BJ (cell line): ENCODE measurements at regions of chr22 and their contacts with region 1.

Region 1: GRCh38 chr22:45101515-45102227 is 62.1 kb upstream of the NUP50 start:
- DNase-seq: no peak
- H3K4me3 ChIP-seq: no peak overlapping the region
- H3K27me3 ChIP-seq: peaks cover 4% of the 10 kb centered on the region
- CTCF ChIP-seq: peak; percentile 80

Region 2: GRCh38 chr22:44920183-44920582 is 181.5 kb before region 1 on chr22:
- CTCF ChIA-PET with region 1: no interaction called
- POLR2A ChIA-PET with region 1: no interaction called
- DNase-seq: no peak
- H3K4me3 ChIP-seq: no peak overlapping the region
- H3K27me3 ChIP-seq: no peaks in the 10 kb centered on the region
- CTCF ChIP-seq: no peak

Region 3: DNA sequence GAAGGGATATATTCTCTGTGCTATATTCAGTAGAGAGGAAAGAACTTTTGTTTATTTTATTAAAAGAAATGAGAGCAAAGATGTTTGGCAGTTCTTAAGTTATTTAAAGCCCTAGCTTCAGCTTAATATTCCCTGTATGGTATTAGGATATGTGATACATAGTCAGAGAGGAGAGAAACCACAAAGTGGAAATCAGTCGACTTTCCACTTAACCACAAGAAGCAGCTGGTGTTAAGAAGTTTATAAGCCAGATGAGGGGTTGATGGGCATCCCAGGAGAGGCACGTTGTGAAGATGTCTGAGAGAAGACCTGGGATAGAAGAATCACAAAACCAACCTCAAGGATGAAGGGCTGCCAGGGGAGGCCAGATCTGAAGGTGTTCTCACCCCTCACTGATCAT is 68.5 kb before region 1 on chr22:
- CTCF ChIA-PET with region 1: no interaction called
- POLR2A ChIA-PET with region 1: no interaction called
- DNase-seq: no peak
- H3K4me3 ChIP-seq: no peak overlapping the region
- H3K27me3 ChIP-seq: peaks cover 3% of the 10 kb centered on the region; the same call in 1 of the 2 replicates
- CTCF ChIP-seq: no peak

Region 4: DNA sequence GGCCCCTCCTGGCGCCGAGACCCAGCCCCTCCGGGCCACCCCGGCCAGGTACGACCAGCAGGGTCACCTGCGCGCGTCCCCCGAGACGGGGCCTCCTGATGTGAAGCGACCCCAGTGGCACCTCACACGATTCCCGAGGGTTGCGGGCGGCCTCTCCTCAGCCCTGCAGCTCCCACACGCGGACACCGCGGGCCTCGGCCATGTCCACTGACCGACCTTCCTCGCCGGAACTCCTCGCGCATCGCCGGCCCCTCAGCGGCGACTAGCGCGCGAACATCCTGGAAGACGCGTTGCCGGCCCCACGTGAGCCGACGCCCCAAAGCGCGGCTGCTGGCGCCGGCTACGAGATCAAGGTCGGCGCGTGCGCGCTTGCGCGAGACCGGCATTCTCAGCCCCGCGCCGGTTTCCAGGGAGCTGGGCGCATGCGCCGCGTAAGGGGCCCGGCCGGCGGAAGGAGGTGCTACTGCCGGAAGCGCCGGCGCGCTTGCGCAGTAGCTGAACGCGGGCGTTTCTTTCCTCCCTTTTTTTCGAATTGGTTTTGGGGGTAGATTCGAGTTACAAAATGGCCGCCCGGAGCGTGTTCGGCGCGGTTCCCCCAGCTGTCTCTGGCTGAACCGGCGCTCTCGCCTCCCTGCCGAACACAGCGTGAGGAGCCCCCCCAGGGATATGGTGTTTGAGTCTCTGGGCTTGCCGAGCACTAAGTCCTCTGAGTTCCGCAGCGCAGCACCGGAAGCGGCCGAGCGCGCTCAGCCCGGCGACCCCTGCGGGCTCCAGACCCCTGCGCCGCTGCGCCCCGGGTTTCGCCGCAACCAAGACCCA is 62.0 kb after region 1 on chr22 and contains the start of gene NUP50:
- CTCF ChIA-PET with region 1: interaction called, 18 read pairs
- POLR2A ChIA-PET with region 1: no interaction called
- DNase-seq: peak; percentile 75
- H3K4me3 ChIP-seq: peak within 1 kb of the TSS; percentile 89
- H3K27me3 ChIP-seq: no peaks in the 10 kb centered on the region
- CTCF ChIP-seq: no peak
- polyA plus RNA-seq, gene NUP50: 11.0 and 12.4 TPM in 2 replicates

Region 5: GRCh38 chr22:45227645-45228400 is 126.2 kb after region 1 on chr22:
- CTCF ChIA-PET with region 1: no interaction called
- POLR2A ChIA-PET with region 1: no interaction called
- DNase-seq: no peak
- H3K4me3 ChIP-seq: no peak overlapping the region
- H3K27me3 ChIP-seq: no peaks in the 10 kb centered on the region
- CTCF ChIP-seq: no peak

Region 6: GRCh38 chr22:45263463-45264269 is 162.0 kb after region 1 on chr22:
- CTCF ChIA-PET with region 1: interaction called, 56 read pairs
- POLR2A ChIA-PET with region 1: no interaction called
- DNase-seq: no peak
- H3K4me3 ChIP-seq: no peak overlapping the region
- H3K27me3 ChIP-seq: no peaks in the 10 kb centered on the region
- CTCF ChIP-seq: peak; percentile 93